CD4-positive, alpha-beta memory T cell (primary cell): ENCODE measurements at regions of chr18 and their contacts with region 1.

Region 1: GRCh38 chr18:49447810-49448745 is 12.4 kb downstream of the DYM start:
- DNase-seq: peak; percentile 41 to 66 (median 52)
- H3K4me3 ChIP-seq: no peak overlapping the region
- H3K4me3 Mint-ChIP-seq: no peak overlapping the region
- H3K27ac ChIP-seq: no peak overlapping the region
- H3K27ac Mint-ChIP-seq: peak overlapping the region in 3 of 7 donors; percentile 20 to 43 (median 34)
- H3K4me1 ChIP-seq: no peaks in the 10 kb centered on the region
- H3K4me1 Mint-ChIP-seq: peaks cover 14 to 26% (median 21%) of the 10 kb centered on the region in 4 donors
- H3K27me3 ChIP-seq: no peaks in the 10 kb centered on the region
- H3K27me3 Mint-ChIP-seq: no peaks in the 10 kb centered on the region

Region 2: GRCh38 chr18:49041435-49042245 is 406.4 kb before region 1 on chr18:
- CTCF ChIA-PET with region 1: no interaction called
- POLR2A ChIA-PET with region 1: no interaction called
- intact Hi-C with region 1: loop called (anchors 10 kb)
- DNase-seq: peak in 4 of 5 donors; percentile 34 to 52 (median 42)
- H3K4me3 ChIP-seq: no peak overlapping the region
- H3K4me3 Mint-ChIP-seq: no peak overlapping the region
- H3K27ac ChIP-seq: no peak overlapping the region
- H3K27ac Mint-ChIP-seq: peak overlapping the region in 1 of 7 donors; percentile 8
- H3K4me1 ChIP-seq: no peaks in the 10 kb centered on the region
- H3K4me1 Mint-ChIP-seq: peaks cover 0 to 6% (median 0%) of the 10 kb centered on the region in 4 donors
- H3K27me3 ChIP-seq: no peaks in the 10 kb centered on the region
- H3K27me3 Mint-ChIP-seq: no peaks in the 10 kb centered on the region

Region 3: GRCh38 chr18:49431165-49431962 is 16.7 kb before region 1 on chr18:
- CTCF ChIA-PET with region 1: interaction called, 40 read pairs
- POLR2A ChIA-PET with region 1: no interaction called
- intact Hi-C with region 1: no loop called
- DNase-seq: no peak
- H3K4me3 ChIP-seq: no peak overlapping the region
- H3K4me3 Mint-ChIP-seq: no peak overlapping the region
- H3K27ac ChIP-seq: no peak overlapping the region
- H3K27ac Mint-ChIP-seq: peak overlapping the region in 2 of 7 donors; percentile 16 to 26
- H3K4me1 ChIP-seq: peaks cover 4% of the 10 kb centered on the region
- H3K4me1 Mint-ChIP-seq: peaks cover 2 to 18% (median 12%) of the 10 kb centered on the region in 4 donors
- H3K27me3 ChIP-seq: no peaks in the 10 kb centered on the region
- H3K27me3 Mint-ChIP-seq: no peaks in the 10 kb centered on the region

Region 4: GRCh38 chr18:49459404-49460171 is 11.5 kb after region 1 on chr18:
- CTCF ChIA-PET with region 1: interaction called, 11 read pairs
- POLR2A ChIA-PET with region 1: no interaction called
- intact Hi-C with region 1: no loop called
- DNase-seq: peak in 4 of 5 donors; percentile 16 to 53 (median 26)
- H3K4me3 ChIP-seq: peak overlapping the region; percentile 43 to 89
- H3K4me3 Mint-ChIP-seq: peak overlapping the region; percentile 86 to 95 (median 91)
- H3K27ac ChIP-seq: peak overlapping the region; percentile 85
- H3K27ac Mint-ChIP-seq: peak overlapping the region; percentile 67 to 93 (median 90)
- H3K4me1 ChIP-seq: peaks cover 45% of the 10 kb centered on the region
- H3K4me1 Mint-ChIP-seq: peaks cover 34 to 61% (median 44%) of the 10 kb centered on the region in 4 donors
- H3K27me3 ChIP-seq: no peaks in the 10 kb centered on the region
- H3K27me3 Mint-ChIP-seq: no peaks in the 10 kb centered on the region

Region 5: GRCh38 chr18:50009773-50010335 is 561.8 kb after region 1 on chr18:
- CTCF ChIA-PET with region 1: no interaction called
- POLR2A ChIA-PET with region 1: no interaction called
- intact Hi-C with region 1: no loop called
- DNase-seq: peak in 4 of 5 donors; percentile 20 to 38 (median 32)
- H3K4me3 ChIP-seq: no peak overlapping the region
- H3K4me3 Mint-ChIP-seq: no peak overlapping the region
- H3K27ac ChIP-seq: no peak overlapping the region
- H3K27ac Mint-ChIP-seq: no peak overlapping the region
- H3K4me1 ChIP-seq: no peaks in the 10 kb centered on the region
- H3K4me1 Mint-ChIP-seq: no peaks in the 10 kb centered on the region
- H3K27me3 ChIP-seq: no peaks in the 10 kb centered on the region
- H3K27me3 Mint-ChIP-seq: no peaks in the 10 kb centered on the region